ENCODE measurements at regions of chr15 and their contacts with region 1.

Region 1: GRCh38 chr15:73240866-73241499 is 127.8 kb downstream of the HCN4 start:
- DNase-seq: peak; percentile 41 to 80 (median 66)
- ATAC-seq: peak; percentile 57
- H3K4me3 ChIP-seq: no peak overlapping the region
- H3K4me3 Mint-ChIP-seq: no peak overlapping the region
- H3K27ac ChIP-seq: no peak overlapping the region
- H3K27ac Mint-ChIP-seq: no peak overlapping the region
- H3K4me1 ChIP-seq: no peaks in the 10 kb centered on the region
- H3K4me1 Mint-ChIP-seq: no peaks in the 10 kb centered on the region
- H3K27me3 ChIP-seq: no peaks in the 10 kb centered on the region
- H3K27me3 Mint-ChIP-seq: no peaks in the 10 kb centered on the region
- CTCF ChIP-seq: peak; percentile 90

Region 2: DNA sequence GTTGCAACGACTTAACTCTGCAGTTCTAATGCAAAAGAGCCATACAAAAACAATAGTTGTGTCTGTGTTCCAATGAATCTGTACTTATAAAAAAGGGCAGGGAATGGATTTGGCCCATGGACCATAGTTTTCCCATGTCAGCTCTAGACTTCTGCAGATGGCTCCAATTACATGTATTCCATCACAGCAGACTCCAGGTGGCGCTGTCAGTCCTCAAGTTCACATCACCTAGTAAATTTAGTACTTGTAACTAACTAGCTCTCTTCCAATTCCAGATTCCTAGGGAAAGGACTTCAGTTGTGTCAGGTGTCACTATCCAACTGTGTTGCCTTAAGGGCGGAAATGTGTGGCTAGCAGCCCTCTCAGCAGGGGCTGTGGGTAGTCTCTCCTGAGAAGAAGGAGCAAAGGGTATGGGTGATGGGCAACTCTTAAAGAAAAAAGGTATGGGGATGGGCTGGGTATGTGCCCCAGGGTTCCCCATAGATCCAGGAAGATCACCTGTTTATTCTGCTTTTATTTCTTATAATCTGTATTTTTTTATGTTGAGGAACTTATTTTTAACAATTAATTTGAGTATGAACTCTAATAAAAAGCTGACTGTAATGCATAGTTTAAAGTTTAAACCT is 518.8 kb before region 1 on chr15:
- CTCF ChIA-PET with region 1: interaction called, 4 read pairs
- POLR2A ChIA-PET with region 1: no interaction called
- intact Hi-C with region 1: loop called in 1 of 2 experiments (anchors 5 kb)
- DNase-seq: peak; percentile 51 to 81 (median 65)
- ATAC-seq: peak; percentile 51
- H3K4me3 ChIP-seq: no peak overlapping the region
- H3K4me3 Mint-ChIP-seq: no peak overlapping the region
- H3K27ac ChIP-seq: no peak overlapping the region
- H3K27ac Mint-ChIP-seq: no peak overlapping the region
- H3K4me1 ChIP-seq: no peaks in the 10 kb centered on the region
- H3K4me1 Mint-ChIP-seq: no peaks in the 10 kb centered on the region
- H3K27me3 ChIP-seq: no peaks in the 10 kb centered on the region
- H3K27me3 Mint-ChIP-seq: no peaks in the 10 kb centered on the region
- CTCF ChIP-seq: peak; percentile 92

Region 3: GRCh38 chr15:72845981-72846383 is 395.0 kb before region 1 on chr15:
- CTCF ChIA-PET with region 1: no interaction called
- POLR2A ChIA-PET with region 1: no interaction called
- intact Hi-C with region 1: no loop called
- DNase-seq: no peak
- ATAC-seq: no peak
- H3K4me3 ChIP-seq: no peak overlapping the region
- H3K4me3 Mint-ChIP-seq: no peak overlapping the region
- H3K27ac ChIP-seq: no peak overlapping the region
- H3K27ac Mint-ChIP-seq: no peak overlapping the region
- H3K4me1 ChIP-seq: peaks cover 5% of the 10 kb centered on the region
- H3K4me1 Mint-ChIP-seq: no peaks in the 10 kb centered on the region
- H3K27me3 ChIP-seq: peaks cover 0 to 3% of the 10 kb centered on the region in 2 experiments
- H3K27me3 Mint-ChIP-seq: peaks cover 48% of the 10 kb centered on the region
- CTCF ChIP-seq: no peak

Region 4: GRCh38 chr15:73265536-73266153 is 24.7 kb after region 1 on chr15:
- CTCF ChIA-PET with region 1: interaction called, 7 read pairs
- POLR2A ChIA-PET with region 1: no interaction called
- intact Hi-C with region 1: loop called in 1 of 2 experiments (anchors 2 kb)
- DNase-seq: peak; percentile 14 to 63 (median 32)
- ATAC-seq: peak; percentile 72
- H3K4me3 ChIP-seq: no peak overlapping the region
- H3K4me3 Mint-ChIP-seq: no peak overlapping the region
- H3K27ac ChIP-seq: no peak overlapping the region
- H3K27ac Mint-ChIP-seq: no peak overlapping the region
- H3K4me1 ChIP-seq: no peaks in the 10 kb centered on the region
- H3K4me1 Mint-ChIP-seq: no peaks in the 10 kb centered on the region
- H3K27me3 ChIP-seq: no peaks in the 10 kb centered on the region
- H3K27me3 Mint-ChIP-seq: no peaks in the 10 kb centered on the region
- CTCF ChIP-seq: peak; percentile 68

Measured in CD4-positive, alpha-beta T cell (primary cell).